ENCODE measurements at regions of chr2 and their contacts with region 1.

Region 1: DNA sequence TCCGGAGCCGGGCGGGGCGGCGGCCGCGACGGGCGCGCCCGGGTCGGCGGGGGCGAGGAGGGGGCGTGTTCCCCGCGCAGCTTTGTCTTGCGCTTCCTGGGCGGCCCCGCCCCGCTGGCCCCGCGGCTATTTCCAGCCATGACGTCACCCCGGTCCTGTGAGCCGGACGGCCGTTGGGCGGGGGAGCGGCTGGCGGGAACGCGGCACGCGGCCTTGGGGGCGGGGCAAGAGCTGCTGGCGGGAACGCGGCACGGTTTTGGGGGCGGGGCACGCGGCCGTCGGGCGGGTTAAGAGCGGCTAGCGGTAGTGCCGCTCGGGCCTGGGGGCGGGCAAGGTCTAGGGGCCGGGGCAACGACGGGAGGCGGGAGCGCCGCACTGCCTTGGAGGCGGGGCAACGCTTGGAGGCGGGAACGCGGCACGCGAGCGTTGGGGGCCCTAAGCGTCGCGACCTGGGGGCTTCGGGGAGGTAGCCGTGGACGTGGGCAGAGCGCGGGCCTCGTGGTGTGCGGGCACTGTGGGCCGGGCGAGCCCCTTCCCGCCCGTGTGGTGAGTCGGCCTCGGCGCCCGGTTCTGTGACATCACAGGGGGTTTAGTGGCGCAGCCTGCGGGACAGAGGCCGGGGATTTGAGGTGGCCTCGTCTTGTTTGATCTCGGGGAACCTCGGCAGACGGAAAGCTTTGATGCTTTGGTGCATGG is 704 bp downstream of the KLF11 start:
- DNase-seq: peak; percentile 98 to 100
- H3K4me3 ChIP-seq: peak overlapping the region; percentile 96
- H3K4me3 Mint-ChIP-seq: peak overlapping the region; percentile 95
- H3K27ac Mint-ChIP-seq: peak overlapping the region; percentile 96
- H3K4me1 ChIP-seq: peaks cover 20% of the 10 kb centered on the region
- H3K4me1 Mint-ChIP-seq: peaks cover 16% of the 10 kb centered on the region
- H3K27me3 ChIP-seq: no peaks in the 10 kb centered on the region
- H3K27me3 Mint-ChIP-seq: no peaks in the 10 kb centered on the region
- CTCF ChIP-seq: no peak

Region 2: DNA sequence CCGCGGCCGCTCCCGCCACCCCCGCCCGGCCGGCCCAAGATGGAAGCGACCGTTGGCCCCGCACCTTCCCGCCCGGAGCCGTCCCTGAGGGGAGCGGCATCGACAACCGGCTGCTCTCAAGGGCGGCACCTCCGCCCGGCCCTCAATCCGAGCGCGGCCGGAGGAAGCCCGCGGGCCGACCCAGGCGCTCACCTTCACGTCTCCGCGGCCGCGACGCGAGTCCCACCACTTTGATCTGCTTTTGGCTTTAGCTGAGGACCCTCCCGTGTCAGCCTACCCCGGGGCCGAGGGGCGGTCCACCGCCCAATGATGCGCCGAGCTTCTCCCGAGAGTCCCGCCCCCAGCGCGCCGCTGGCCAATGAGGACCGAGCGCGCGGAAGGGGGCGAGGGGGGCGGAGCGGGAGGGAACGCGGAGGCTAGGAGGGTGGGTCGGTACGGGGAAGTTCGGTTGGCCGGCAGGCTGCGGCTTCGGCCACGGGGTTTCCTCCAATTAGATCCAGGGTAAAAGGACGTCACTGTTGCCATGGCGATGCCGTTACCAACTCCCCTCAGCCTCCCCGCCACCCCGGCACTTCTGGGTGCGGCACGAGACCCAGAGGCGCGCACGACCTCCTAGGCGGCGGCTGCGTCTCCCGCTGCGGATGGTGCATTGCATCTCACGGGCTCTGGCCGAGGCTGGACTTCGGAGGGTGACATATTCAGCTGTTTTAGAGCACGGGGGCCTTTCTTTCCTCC is 413.1 kb before region 1 on chr2 and contains the start of gene YWHAQ:
- CTCF ChIA-PET with region 1: no interaction called
- POLR2A ChIA-PET with region 1: interaction called, 6 read pairs
- intact Hi-C with region 1: loop called (anchors 2 kb)
- DNase-seq: peak; percentile 99 to 100
- H3K4me3 ChIP-seq: peak within 1 kb of the TSS; percentile 89
- H3K4me3 Mint-ChIP-seq: peak within 1 kb of the TSS; percentile 93
- H3K27ac Mint-ChIP-seq: peak within 1 kb of the TSS; percentile 92
- H3K4me1 ChIP-seq: peaks cover 25% of the 10 kb centered on the region
- H3K4me1 Mint-ChIP-seq: peaks cover 41% of the 10 kb centered on the region
- H3K27me3 ChIP-seq: no peaks in the 10 kb centered on the region
- H3K27me3 Mint-ChIP-seq: no peaks in the 10 kb centered on the region
- CTCF ChIP-seq: no peak
- total RNA-seq, gene YWHAQ: 344 and 365 TPM in 2 replicates

Region 3: DNA sequence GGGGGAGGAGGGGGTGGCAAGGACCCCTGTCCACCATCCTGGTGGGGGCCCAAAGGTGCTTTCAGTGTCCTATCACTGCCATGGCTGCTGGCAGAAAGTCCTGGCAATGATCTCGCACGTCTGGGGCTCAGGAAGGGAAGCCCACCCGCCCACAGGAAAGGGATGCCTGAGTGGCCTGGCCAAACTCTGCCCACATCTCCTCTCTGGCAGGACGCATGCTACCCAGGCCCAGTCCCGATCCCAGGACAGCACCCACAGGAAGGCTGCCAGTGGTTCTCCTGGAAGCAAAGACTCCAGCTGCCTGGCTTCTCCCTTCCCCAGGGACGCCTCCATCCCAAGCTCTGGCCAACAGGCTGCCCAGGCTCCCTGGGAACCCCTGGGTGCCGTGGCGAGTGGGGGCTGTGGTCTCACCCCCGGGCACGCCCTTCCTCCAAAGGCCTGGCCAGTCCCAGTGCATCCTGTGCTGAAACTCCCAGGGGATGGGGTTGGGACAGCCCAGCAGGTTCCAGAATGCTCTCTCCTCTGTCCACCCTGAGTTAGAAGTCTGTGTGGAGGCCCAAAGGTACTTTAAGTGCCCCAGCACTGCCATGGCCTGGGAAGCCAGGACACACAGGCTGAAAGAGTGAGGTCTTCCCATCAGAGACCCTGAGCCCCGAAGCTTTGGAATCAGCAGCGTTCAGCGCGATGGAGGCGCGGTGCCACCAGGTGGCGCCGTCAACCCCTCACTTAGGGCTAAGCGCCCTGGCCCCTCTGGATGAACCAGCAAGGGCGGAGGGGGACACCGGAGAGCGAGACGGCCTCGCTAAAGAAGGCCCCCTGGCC is 230.5 kb before region 1 on chr2:
- CTCF ChIA-PET with region 1: interaction called, 10 read pairs
- POLR2A ChIA-PET with region 1: no interaction called
- intact Hi-C with region 1: loop called (anchors 1 kb)
- DNase-seq: peak; percentile 66 to 81
- H3K4me3 ChIP-seq: 0 out of 2 replicates have a peak overlapping the region, but pooled peaks have one; percentile 21
- H3K4me3 Mint-ChIP-seq: peak overlapping the region; percentile 28
- H3K27ac Mint-ChIP-seq: no peak overlapping the region
- H3K4me1 ChIP-seq: no peaks in the 10 kb centered on the region
- H3K4me1 Mint-ChIP-seq: no peaks in the 10 kb centered on the region
- H3K27me3 ChIP-seq: no peaks in the 10 kb centered on the region
- H3K27me3 Mint-ChIP-seq: no peaks in the 10 kb centered on the region
- CTCF ChIP-seq: peak; percentile 95 to 96

Region 4: GRCh38 chr2:9984217-9984739 is 59.8 kb before region 1 on chr2:
- CTCF ChIA-PET with region 1: interaction called, 35 read pairs
- POLR2A ChIA-PET with region 1: interaction called, 4 read pairs
- intact Hi-C with region 1: loop called (anchors 1 kb)
- DNase-seq: peak in 1 of 2 experiments; percentile 57
- H3K4me3 ChIP-seq: no peak overlapping the region
- H3K4me3 Mint-ChIP-seq: no peak overlapping the region
- H3K27ac Mint-ChIP-seq: no peak overlapping the region
- H3K4me1 ChIP-seq: no peaks in the 10 kb centered on the region
- H3K4me1 Mint-ChIP-seq: no peaks in the 10 kb centered on the region
- H3K27me3 ChIP-seq: no peaks in the 10 kb centered on the region
- H3K27me3 Mint-ChIP-seq: no peaks in the 10 kb centered on the region
- CTCF ChIP-seq: peak; percentile 57 to 72

Region 5: GRCh38 chr2:10122386-10123280 is 78.6 kb after region 1 on chr2 and contains the start of gene RRM2:
- CTCF ChIA-PET with region 1: no interaction called
- POLR2A ChIA-PET with region 1: no interaction called
- intact Hi-C with region 1: loop called (anchors 2 kb)
- DNase-seq: peak; percentile 98
- H3K4me3 ChIP-seq: peak within 1 kb of the TSS; percentile 66
- H3K4me3 Mint-ChIP-seq: peak within 1 kb of the TSS; percentile 96
- H3K27ac Mint-ChIP-seq: peak within 1 kb of the TSS; percentile 96
- H3K4me1 ChIP-seq: peaks cover 11% of the 10 kb centered on the region
- H3K4me1 Mint-ChIP-seq: peaks cover 13% of the 10 kb centered on the region
- H3K27me3 ChIP-seq: no peaks in the 10 kb centered on the region
- H3K27me3 Mint-ChIP-seq: no peaks in the 10 kb centered on the region
- CTCF ChIP-seq: no peak
- total RNA-seq, gene RRM2: 160 and 169 TPM in 2 replicates

Region 6: DNA sequence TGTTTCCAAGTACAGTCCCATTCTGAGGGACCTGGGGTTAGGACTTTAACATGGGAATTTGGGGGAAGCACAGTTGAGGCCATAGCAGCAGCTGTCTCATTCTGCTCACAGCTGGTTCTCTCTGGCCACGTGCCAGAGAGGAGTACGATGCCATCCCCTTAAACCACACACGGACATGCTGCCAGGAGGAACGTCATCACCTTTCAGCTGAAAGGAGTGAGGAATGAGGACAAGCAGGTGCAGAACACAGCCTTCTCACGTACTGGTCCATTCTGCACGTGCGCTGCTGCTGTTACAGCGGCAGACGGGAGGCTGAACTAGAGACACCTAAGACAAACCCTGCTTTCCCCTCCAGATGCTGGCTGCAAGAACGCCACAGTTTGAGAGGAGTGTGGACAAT is 370.5 kb after region 1 on chr2:
- CTCF ChIA-PET with region 1: no interaction called
- POLR2A ChIA-PET with region 1: no interaction called
- intact Hi-C with region 1: no loop called
- DNase-seq: no peak
- H3K4me3 ChIP-seq: no peak overlapping the region
- H3K4me3 Mint-ChIP-seq: no peak overlapping the region
- H3K27ac Mint-ChIP-seq: no peak overlapping the region
- H3K4me1 ChIP-seq: peaks cover 14% of the 10 kb centered on the region
- H3K4me1 Mint-ChIP-seq: peaks cover 14% of the 10 kb centered on the region
- H3K27me3 ChIP-seq: no peaks in the 10 kb centered on the region
- H3K27me3 Mint-ChIP-seq: no peaks in the 10 kb centered on the region
- CTCF ChIP-seq: no peak